ENCODE measurements at regions of chr11 and their contacts with region 1.

Region 1: GRCh38 chr11:14148653-14149273 is 186.2 kb downstream of the SPON1 start:
- DNase-seq: peak in 2 of 9 experiments; percentile 44 to 65
- ATAC-seq: peak; percentile 94
- H3K4me3 ChIP-seq: no peak overlapping the region
- H3K4me3 Mint-ChIP-seq: no peak overlapping the region
- H3K27ac ChIP-seq: no peak overlapping the region
- H3K27ac Mint-ChIP-seq: no peak overlapping the region
- H3K4me1 ChIP-seq: no peaks in the 10 kb centered on the region
- H3K4me1 Mint-ChIP-seq: peaks cover 3% of the 10 kb centered on the region
- H3K27me3 ChIP-seq: no peaks in the 10 kb centered on the region
- H3K27me3 Mint-ChIP-seq: no peaks in the 10 kb centered on the region
- CTCF ChIP-seq: peak; percentile 75

Region 2: GRCh38 chr11:13970986-13971385 is 177.8 kb before region 1 on chr11:
- CTCF ChIA-PET with region 1: interaction called, 49 read pairs
- POLR2A ChIA-PET with region 1: interaction called, 3 read pairs
- intact Hi-C with region 1: no loop called
- DNase-seq: peak in 2 of 9 experiments; percentile 27 to 33
- ATAC-seq: no peak
- H3K4me3 ChIP-seq: no peak overlapping the region
- H3K4me3 Mint-ChIP-seq: no peak overlapping the region
- H3K27ac ChIP-seq: no peak overlapping the region
- H3K27ac Mint-ChIP-seq: no peak overlapping the region
- H3K4me1 ChIP-seq: no peaks in the 10 kb centered on the region
- H3K4me1 Mint-ChIP-seq: no peaks in the 10 kb centered on the region
- H3K27me3 ChIP-seq: peaks cover 0 to 1% of the 10 kb centered on the region in 2 experiments
- H3K27me3 Mint-ChIP-seq: peaks cover 16% of the 10 kb centered on the region
- CTCF ChIP-seq: no peak

Region 3: GRCh38 chr11:14107050-14107430 is 41.7 kb before region 1 on chr11:
- CTCF ChIA-PET with region 1: interaction called, 6 read pairs
- POLR2A ChIA-PET with region 1: no interaction called
- intact Hi-C with region 1: loop called in 1 of 2 experiments (anchors 5 kb)
- DNase-seq: no peak
- ATAC-seq: no peak
- H3K4me3 ChIP-seq: no peak overlapping the region
- H3K4me3 Mint-ChIP-seq: no peak overlapping the region
- H3K27ac ChIP-seq: no peak overlapping the region
- H3K27ac Mint-ChIP-seq: no peak overlapping the region
- H3K4me1 ChIP-seq: no peaks in the 10 kb centered on the region
- H3K4me1 Mint-ChIP-seq: no peaks in the 10 kb centered on the region
- H3K27me3 ChIP-seq: no peaks in the 10 kb centered on the region
- H3K27me3 Mint-ChIP-seq: no peaks in the 10 kb centered on the region
- CTCF ChIP-seq: no peak

Region 4: GRCh38 chr11:14249121-14249963 is 100.6 kb after region 1 on chr11:
- CTCF ChIA-PET with region 1: interaction called, 14 read pairs
- POLR2A ChIA-PET with region 1: no interaction called
- intact Hi-C with region 1: loop called (anchors 1 to 2 kb)
- DNase-seq: peak; percentile 37 to 85 (median 73)
- ATAC-seq: peak; percentile 61
- H3K4me3 ChIP-seq: no peak overlapping the region
- H3K4me3 Mint-ChIP-seq: peak overlapping the region; percentile 61
- H3K27ac ChIP-seq: no peak overlapping the region
- H3K27ac Mint-ChIP-seq: no peak overlapping the region
- H3K4me1 ChIP-seq: peaks cover 16% of the 10 kb centered on the region
- H3K4me1 Mint-ChIP-seq: peaks cover 22% of the 10 kb centered on the region
- H3K27me3 ChIP-seq: no peaks in the 10 kb centered on the region
- H3K27me3 Mint-ChIP-seq: no peaks in the 10 kb centered on the region
- CTCF ChIP-seq: peak; percentile 98

Region 5: DNA sequence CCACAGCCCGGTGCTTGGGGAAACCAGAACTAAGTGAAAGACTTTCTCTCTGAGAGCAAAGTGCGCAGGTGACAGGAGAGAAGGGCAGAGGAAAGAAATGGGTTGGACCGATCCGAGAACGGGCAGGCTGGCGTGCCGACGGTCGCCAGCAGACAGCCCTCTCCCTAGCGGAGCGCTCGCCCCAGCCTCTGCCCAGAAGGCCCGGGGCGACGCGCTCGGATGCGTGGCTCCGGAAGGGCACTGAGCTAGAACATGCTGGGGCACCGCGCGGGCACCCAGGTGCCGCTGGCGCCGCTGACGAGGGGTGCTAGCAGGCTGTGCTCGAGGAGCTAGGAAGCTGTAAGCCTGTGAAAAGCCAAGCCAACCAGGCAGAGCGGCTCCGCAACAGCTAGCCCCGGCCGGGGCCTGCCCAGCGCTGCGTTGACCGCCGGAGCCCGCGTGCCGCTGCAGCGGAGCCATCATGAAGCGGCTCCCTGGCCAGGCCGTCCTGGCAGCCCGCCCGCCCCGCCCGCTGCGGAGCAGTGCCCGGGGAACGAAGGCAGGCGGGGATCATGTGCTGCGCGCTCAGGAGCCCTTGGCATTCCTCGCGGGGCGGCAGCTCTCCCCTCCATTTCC is 232.3 kb after region 1 on chr11:
- CTCF ChIA-PET with region 1: no interaction called
- POLR2A ChIA-PET with region 1: no interaction called
- intact Hi-C with region 1: no loop called
- DNase-seq: peak; percentile 24 to 74 (median 52)
- ATAC-seq: peak; percentile 90
- H3K4me3 ChIP-seq: peak overlapping the region; percentile 47 to 50
- H3K4me3 Mint-ChIP-seq: peak overlapping the region; percentile 82
- H3K27ac ChIP-seq: peak overlapping the region in 1 of 2 experiments; percentile 17
- H3K27ac Mint-ChIP-seq: no peak overlapping the region
- H3K4me1 ChIP-seq: no peaks in the 10 kb centered on the region
- H3K4me1 Mint-ChIP-seq: peaks cover 4% of the 10 kb centered on the region
- H3K27me3 ChIP-seq: peaks cover 0 to 4% of the 10 kb centered on the region in 2 experiments
- H3K27me3 Mint-ChIP-seq: peaks cover 10% of the 10 kb centered on the region
- CTCF ChIP-seq: no peak

Measured in CD8-positive, alpha-beta T cell (primary cell).